CD4-positive, alpha-beta memory T cell (primary cell): ENCODE measurements at regions of chr5 and their contacts with region 1.

Region 1: GRCh38 chr5:43631182-43631910 is 28.4 kb downstream of the NNT start:
- DNase-seq: peak; percentile 34 to 53 (median 37)
- H3K4me3 ChIP-seq: no peak overlapping the region
- H3K4me3 Mint-ChIP-seq: no peak overlapping the region
- H3K27ac ChIP-seq: no peak overlapping the region
- H3K27ac Mint-ChIP-seq: peak overlapping the region in 3 of 7 donors; percentile 8 to 68 (median 65)
- H3K4me1 ChIP-seq: no peaks in the 10 kb centered on the region
- H3K4me1 Mint-ChIP-seq: peaks cover 25 to 34% (median 29%) of the 10 kb centered on the region in 4 donors
- H3K27me3 ChIP-seq: no peaks in the 10 kb centered on the region
- H3K27me3 Mint-ChIP-seq: no peaks in the 10 kb centered on the region

Region 2: GRCh38 chr5:43602461-43603343 is 28.6 kb before region 1 on chr5 and contains the start of gene NNT:
- CTCF ChIA-PET with region 1: interaction called, 16 read pairs
- POLR2A ChIA-PET with region 1: interaction called, 11 read pairs
- intact Hi-C with region 1: no loop called
- DNase-seq: peak; percentile 75 to 84 (median 80)
- H3K4me3 ChIP-seq: peak within 1 kb of the TSS; percentile 91 to 99
- H3K4me3 Mint-ChIP-seq: peak within 1 kb of the TSS; percentile 90 to 98 (median 96)
- H3K27ac ChIP-seq: peak within 1 kb of the TSS; percentile 88
- H3K27ac Mint-ChIP-seq: peak within 1 kb of the TSS; percentile 91 to 98 (median 94)
- H3K4me1 ChIP-seq: peaks cover 38% of the 10 kb centered on the region
- H3K4me1 Mint-ChIP-seq: peaks cover 18 to 63% (median 49%) of the 10 kb centered on the region in 4 donors
- H3K27me3 ChIP-seq: no peaks in the 10 kb centered on the region
- H3K27me3 Mint-ChIP-seq: no peaks in the 10 kb centered on the region
- total RNA-seq, gene NNT: 56.1 to 57.6 TPM

Region 3: GRCh38 chr5:43646992-43647391 is 15.6 kb after region 1 on chr5:
- CTCF ChIA-PET with region 1: interaction called, 27 read pairs
- POLR2A ChIA-PET with region 1: no interaction called
- intact Hi-C with region 1: no loop called
- DNase-seq: no peak
- H3K4me3 ChIP-seq: no peak overlapping the region
- H3K4me3 Mint-ChIP-seq: no peak overlapping the region
- H3K27ac ChIP-seq: no peak overlapping the region
- H3K27ac Mint-ChIP-seq: peak overlapping the region in 1 of 7 donors; percentile 3
- H3K4me1 ChIP-seq: no peaks in the 10 kb centered on the region
- H3K4me1 Mint-ChIP-seq: peaks cover 0 to 6% (median 4%) of the 10 kb centered on the region in 4 donors
- H3K27me3 ChIP-seq: no peaks in the 10 kb centered on the region
- H3K27me3 Mint-ChIP-seq: no peaks in the 10 kb centered on the region

Region 4: GRCh38 chr5:43652537-43653302 is 21.4 kb after region 1 on chr5:
- CTCF ChIA-PET with region 1: interaction called, 27 read pairs
- POLR2A ChIA-PET with region 1: no interaction called
- intact Hi-C with region 1: no loop called
- DNase-seq: no peak
- H3K4me3 ChIP-seq: no peak overlapping the region
- H3K4me3 Mint-ChIP-seq: no peak overlapping the region
- H3K27ac ChIP-seq: no peak overlapping the region
- H3K27ac Mint-ChIP-seq: no peak overlapping the region
- H3K4me1 ChIP-seq: no peaks in the 10 kb centered on the region
- H3K4me1 Mint-ChIP-seq: no peaks in the 10 kb centered on the region
- H3K27me3 ChIP-seq: no peaks in the 10 kb centered on the region
- H3K27me3 Mint-ChIP-seq: no peaks in the 10 kb centered on the region

Region 5: GRCh38 chr5:43753069-43753468 is 121.7 kb after region 1 on chr5:
- CTCF ChIA-PET with region 1: no interaction called
- POLR2A ChIA-PET with region 1: no interaction called
- intact Hi-C with region 1: no loop called
- DNase-seq: no peak
- H3K4me3 ChIP-seq: no peak overlapping the region
- H3K4me3 Mint-ChIP-seq: no peak overlapping the region
- H3K27ac ChIP-seq: no peak overlapping the region
- H3K27ac Mint-ChIP-seq: no peak overlapping the region
- H3K4me1 ChIP-seq: no peaks in the 10 kb centered on the region
- H3K4me1 Mint-ChIP-seq: no peaks in the 10 kb centered on the region
- H3K27me3 ChIP-seq: no peaks in the 10 kb centered on the region
- H3K27me3 Mint-ChIP-seq: peaks cover 2 to 3% of the 10 kb centered on the region in 2 donors

Region 6: GRCh38 chr5:44774279-44774880 is 1143.0 kb after region 1 on chr5:
- CTCF ChIA-PET with region 1: interaction called, 5 read pairs
- POLR2A ChIA-PET with region 1: no interaction called
- intact Hi-C with region 1: loop called (anchors 5 kb)
- DNase-seq: peak in 4 of 5 donors; percentile 13 to 21 (median 18)
- H3K4me3 ChIP-seq: no peak overlapping the region
- H3K4me3 Mint-ChIP-seq: no peak overlapping the region
- H3K27ac ChIP-seq: no peak overlapping the region
- H3K27ac Mint-ChIP-seq: no peak overlapping the region
- H3K4me1 ChIP-seq: no peaks in the 10 kb centered on the region
- H3K4me1 Mint-ChIP-seq: no peaks in the 10 kb centered on the region
- H3K27me3 ChIP-seq: no peaks in the 10 kb centered on the region
- H3K27me3 Mint-ChIP-seq: peaks cover 6 to 9% of the 10 kb centered on the region in 2 donors